Mammary epithelial cell (primary cell): ENCODE measurements at regions of chrX and their contacts with region 1.

Region 1: DNA sequence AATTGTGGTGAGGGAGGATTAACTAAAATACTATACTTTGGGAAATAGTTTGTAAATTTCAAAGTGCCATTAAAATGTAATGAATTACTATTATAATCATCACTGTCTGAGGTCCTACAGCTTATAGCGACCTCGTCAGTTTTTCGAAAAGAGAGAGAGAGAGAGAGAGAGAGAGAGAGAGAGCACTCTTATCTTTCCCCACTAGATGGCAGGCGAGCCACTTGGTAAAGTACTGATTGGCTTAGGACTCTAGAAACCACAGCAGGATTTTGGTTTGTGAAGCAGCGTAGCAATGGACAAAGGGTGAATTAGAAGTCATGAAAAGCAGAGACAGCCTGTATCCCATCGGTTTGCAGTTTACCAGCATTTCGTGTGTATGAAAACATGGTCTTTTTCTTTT is 52.5 kb downstream of the LINC00632 start:
- DNase-seq: peak; percentile 35
- H3K4me3 ChIP-seq: no peak overlapping the region
- H3K27ac ChIP-seq: no peak overlapping the region
- H3K4me1 ChIP-seq: no peaks in the 10 kb centered on the region
- H3K27me3 ChIP-seq: no peaks in the 10 kb centered on the region
- CTCF ChIP-seq: peak; percentile 76 to 83

Region 2: DNA sequence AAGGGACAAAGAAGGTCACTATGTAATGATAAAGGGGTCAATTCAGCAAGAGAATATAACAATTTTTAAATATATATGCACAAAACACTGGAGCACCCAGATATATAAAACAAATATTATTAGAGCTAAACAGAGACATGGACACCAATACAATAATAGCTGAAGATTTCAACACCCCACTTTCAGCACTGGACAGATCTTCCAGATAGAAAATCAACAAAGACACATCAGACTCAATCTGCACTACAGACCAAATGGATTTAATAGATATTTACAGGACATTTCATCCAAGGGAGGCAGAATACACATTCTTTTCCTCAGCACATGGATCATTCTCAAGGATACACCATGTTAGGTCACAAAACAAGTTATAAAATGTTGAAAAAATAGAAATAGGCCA is 368.6 kb before region 1 on chrX:
- CTCF ChIA-PET with region 1: interaction called, 10 read pairs
- dilution Hi-C with region 1: no loop called
- in situ Hi-C with region 1: no loop called
- intact Hi-C with region 1: no loop called
- DNase-seq: no peak
- H3K4me3 ChIP-seq: no peak overlapping the region
- H3K27ac ChIP-seq: no peak overlapping the region
- H3K4me1 ChIP-seq: no peaks in the 10 kb centered on the region
- H3K27me3 ChIP-seq: no peaks in the 10 kb centered on the region
- CTCF ChIP-seq: no peak

Region 3: GRCh38 chrX:140866446-140866845 is 104.4 kb after region 1 on chrX:
- CTCF ChIA-PET with region 1: no interaction called
- dilution Hi-C with region 1: no loop called
- in situ Hi-C with region 1: no loop called
- intact Hi-C with region 1: no loop called
- DNase-seq: no peak
- H3K4me3 ChIP-seq: no peak overlapping the region
- H3K27ac ChIP-seq: no peak overlapping the region
- H3K4me1 ChIP-seq: no peaks in the 10 kb centered on the region
- H3K27me3 ChIP-seq: no peaks in the 10 kb centered on the region
- CTCF ChIP-seq: no peak